Panc1 (cell line): ENCODE measurements at regions of chr18 and their contacts with region 1.

Region 1: GRCh38 chr18:67515945-67516538 is 478 bp downstream of the DSEL start:
- DNase-seq: peak; percentile 42
- ATAC-seq: peak; percentile 81
- H3K4me3 ChIP-seq: peak overlapping the region; percentile 48 to 73
- H3K27ac ChIP-seq: peak overlapping the region; percentile 63
- H3K4me1 ChIP-seq: peaks cover 5% of the 10 kb centered on the region; the same call in 1 of the 2 replicates
- H3K27me3 ChIP-seq: no peaks in the 10 kb centered on the region
- CTCF ChIP-seq: peak; percentile 76

Region 2: DNA sequence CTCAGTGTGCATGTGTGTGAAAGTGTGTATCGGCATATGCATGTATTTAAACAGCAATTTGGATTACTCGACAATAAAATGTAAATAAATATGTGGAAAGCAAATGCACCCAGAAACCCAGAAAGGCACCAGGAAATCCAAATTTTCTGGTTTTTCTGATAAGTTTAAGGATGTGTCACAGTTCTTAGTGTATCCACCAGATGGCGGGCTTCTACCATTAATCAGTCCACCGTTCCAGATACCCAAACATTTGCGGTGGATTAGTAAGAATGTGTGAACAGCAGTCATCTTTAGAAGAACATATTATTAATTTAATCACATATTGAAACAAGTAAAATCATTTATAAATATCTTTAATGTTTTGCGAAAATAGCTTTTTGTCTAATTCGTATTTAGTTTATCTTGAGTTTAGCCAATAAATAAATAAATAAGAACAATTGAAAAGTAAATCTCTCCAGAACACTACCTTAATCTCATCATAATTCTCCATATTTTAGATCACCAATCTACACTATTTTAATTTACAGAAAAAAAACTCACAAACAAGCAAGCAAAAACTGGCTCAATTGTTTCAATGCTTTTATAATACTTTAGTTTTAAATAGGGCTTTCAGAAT is 298.4 kb before region 1 on chr18:
- CTCF ChIA-PET with region 1: no interaction called
- POLR2A ChIA-PET with region 1: no interaction called
- in situ Hi-C with region 1: no loop called
- intact Hi-C with region 1: loop called (anchors 1 kb)
- DNase-seq: peak; percentile 35
- ATAC-seq: peak; percentile 80; the same call in 1 of the 2 replicates
- H3K4me3 ChIP-seq: no peak overlapping the region
- H3K27ac ChIP-seq: no peak overlapping the region
- H3K4me1 ChIP-seq: no peaks in the 10 kb centered on the region
- H3K27me3 ChIP-seq: no peaks in the 10 kb centered on the region
- CTCF ChIP-seq: peak; percentile 42; the same call in 1 of the 2 replicates

Region 3: GRCh38 chr18:67577386-67577785 is 61.3 kb after region 1 on chr18:
- CTCF ChIA-PET with region 1: interaction called, 17 read pairs
- POLR2A ChIA-PET with region 1: no interaction called
- in situ Hi-C with region 1: no loop called
- intact Hi-C with region 1: no loop called
- DNase-seq: no peak
- ATAC-seq: no peak
- H3K4me3 ChIP-seq: no peak overlapping the region
- H3K27ac ChIP-seq: no peak overlapping the region
- H3K4me1 ChIP-seq: no peaks in the 10 kb centered on the region
- H3K27me3 ChIP-seq: no peaks in the 10 kb centered on the region
- CTCF ChIP-seq: no peak

Region 4: GRCh38 chr18:68660354-68661183 is 1144.5 kb after region 1 on chr18:
- CTCF ChIA-PET with region 1: interaction called, 4 read pairs
- POLR2A ChIA-PET with region 1: no interaction called
- in situ Hi-C with region 1: no loop called
- intact Hi-C with region 1: loop called (anchors 10 kb)
- DNase-seq: peak; percentile 22
- ATAC-seq: no peak
- H3K4me3 ChIP-seq: no peak overlapping the region
- H3K27ac ChIP-seq: no peak overlapping the region
- H3K4me1 ChIP-seq: no peaks in the 10 kb centered on the region
- H3K27me3 ChIP-seq: no peaks in the 10 kb centered on the region
- CTCF ChIP-seq: peak; percentile 46; the same call in 1 of the 2 replicates